ENCODE measurements at regions of chr6 and their contacts with region 1.

Region 1: GRCh38 chr6:169851641-169852503 is 100.5 kb downstream of the ERMARD start:
- DNase-seq: no peak
- ATAC-seq: peak; percentile 48

Region 2: GRCh38 chr6:169824021-169824420 is 27.9 kb before region 1 on chr6:
- intact Hi-C with region 1: no loop called
- DNase-seq: no peak
- ATAC-seq: no peak

Region 3: DNA sequence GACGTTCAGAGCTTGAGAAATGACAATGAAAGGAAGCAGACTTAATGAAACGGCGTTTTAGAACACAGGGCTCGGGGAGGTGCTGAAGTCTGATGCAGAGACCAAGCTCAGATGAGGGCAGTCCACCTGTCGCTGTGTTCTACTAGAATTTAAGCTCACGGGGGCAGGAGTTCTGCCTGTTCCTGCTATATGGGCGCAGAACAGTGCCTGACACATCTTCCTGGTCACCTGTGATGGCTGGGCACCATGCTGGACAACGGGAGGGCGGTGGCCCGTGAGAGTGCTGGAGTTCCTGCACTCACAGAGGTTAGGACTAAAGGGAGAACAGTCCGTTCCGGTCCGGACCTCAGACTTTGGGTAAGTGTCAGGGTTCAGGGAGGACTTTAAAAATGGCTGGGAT is 30.1 kb after region 1 on chr6:
- intact Hi-C with region 1: no loop called
- DNase-seq: no peak
- ATAC-seq: no peak

Region 4: DNA sequence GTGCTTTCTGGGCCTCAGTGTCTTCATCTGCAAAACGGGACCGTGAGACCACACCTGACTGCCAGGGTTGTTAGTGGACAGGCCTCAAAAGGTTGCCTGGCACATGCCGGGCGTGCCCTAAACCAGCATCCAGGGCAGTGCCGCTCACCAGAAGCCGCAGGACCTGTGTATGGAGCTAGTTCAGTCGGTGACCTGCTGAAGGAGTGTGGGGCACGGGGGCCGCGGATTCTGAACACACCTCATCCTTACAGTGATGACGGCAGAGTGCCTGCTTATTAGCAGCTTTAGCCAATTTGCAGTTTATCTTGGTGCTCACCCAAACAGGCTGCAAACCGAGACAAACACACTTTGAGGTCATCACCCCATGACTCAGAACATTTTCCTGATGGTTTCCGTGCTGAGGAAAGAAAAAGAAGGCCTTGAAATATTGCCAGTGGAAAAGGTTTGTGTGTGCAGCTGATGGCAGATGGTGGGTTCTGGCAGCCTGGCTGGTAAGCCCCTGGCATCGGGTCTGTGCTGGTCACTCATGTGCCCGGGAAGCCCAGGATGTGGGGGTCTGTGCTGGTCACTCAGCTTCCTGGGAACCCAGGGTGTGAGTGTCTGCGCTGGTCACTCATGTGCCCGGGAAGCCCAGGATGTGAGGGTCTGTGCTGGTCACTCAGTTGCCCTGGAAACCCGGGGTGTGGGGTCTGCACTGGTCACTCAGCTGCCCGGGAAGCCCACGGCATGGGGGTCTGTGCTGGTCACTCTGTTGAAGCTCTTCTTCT is 53.4 kb after region 1 on chr6:
- intact Hi-C with region 1: loop called (anchors 5 kb)
- DNase-seq: no peak
- ATAC-seq: peak; percentile 39